Natural killer cell (primary cell): ENCODE measurements at regions of chrX and their contacts with region 1.

Region 1: DNA sequence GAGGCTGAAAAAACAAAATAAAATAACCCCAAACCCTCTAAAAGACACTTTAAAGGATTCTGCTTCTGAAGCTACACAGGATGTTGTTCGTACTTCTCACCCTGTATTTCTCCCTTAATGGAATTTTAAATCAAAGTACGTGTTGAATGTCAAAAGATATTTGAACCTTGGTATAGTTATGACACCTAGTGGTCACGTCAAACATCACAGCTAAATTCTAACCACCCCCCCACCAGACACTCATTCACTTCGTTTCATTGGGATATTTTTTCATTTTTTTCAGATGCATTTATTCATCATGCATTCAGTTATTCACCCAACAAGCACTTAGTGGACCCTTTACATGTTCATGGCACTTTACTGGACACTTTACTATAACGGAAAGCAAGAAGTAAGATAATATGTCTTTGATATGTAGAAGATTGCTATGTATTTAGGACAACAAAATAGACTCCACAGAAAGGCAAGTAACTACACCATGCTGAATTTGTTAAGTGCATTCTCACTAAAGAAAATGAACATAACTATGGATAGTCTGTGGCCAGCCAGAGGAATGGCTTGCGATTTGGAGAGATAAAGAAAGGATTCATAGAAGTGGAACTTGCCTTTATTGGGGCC is 62.5 kb upstream of the GPR174 start:
- DNase-seq: peak in 1 of 2 donors; percentile 79
- ATAC-seq: peak; percentile 69 to 88 (median 87)
- H3K4me3 ChIP-seq: no peak overlapping the region
- H3K4me3 Mint-ChIP-seq: no peak overlapping the region
- H3K27ac ChIP-seq: no peak overlapping the region
- H3K27ac Mint-ChIP-seq: peak overlapping the region in 1 of 2 donors; percentile 4
- H3K4me1 ChIP-seq: no peaks in the 10 kb centered on the region
- H3K4me1 Mint-ChIP-seq: peaks cover 7 to 11% of the 10 kb centered on the region in 2 donors
- H3K27me3 ChIP-seq: no peaks in the 10 kb centered on the region
- H3K27me3 Mint-ChIP-seq: no peaks in the 10 kb centered on the region
- CTCF ChIP-seq: peak; percentile 59

Region 2: DNA sequence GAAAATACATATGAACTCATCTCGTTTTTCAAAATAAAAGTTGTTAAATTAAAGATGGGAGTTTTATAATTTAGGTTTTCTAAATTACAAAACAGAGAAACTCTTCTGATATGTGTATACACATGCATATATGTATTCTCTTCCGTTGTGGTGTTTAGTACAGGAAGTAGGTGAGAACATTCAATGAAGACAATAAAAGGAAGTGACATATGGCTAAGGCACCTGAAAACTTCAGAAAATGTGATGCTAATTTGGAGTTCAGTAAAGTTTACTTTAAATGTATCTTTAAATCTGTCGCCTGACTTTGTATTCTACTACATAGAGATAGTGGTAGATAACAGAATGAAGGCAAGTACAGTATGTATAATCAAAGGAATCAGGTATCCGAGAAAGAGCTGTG is 318.6 kb after region 1 on chrX:
- intact Hi-C with region 1: loop called (anchors 10 kb)
- DNase-seq: peak in 1 of 2 donors; percentile 19
- ATAC-seq: peak; percentile 47 to 68 (median 49)
- H3K4me3 ChIP-seq: no peak overlapping the region
- H3K4me3 Mint-ChIP-seq: peak overlapping the region; percentile 60
- H3K27ac ChIP-seq: peak overlapping the region; percentile 25
- H3K27ac Mint-ChIP-seq: peak overlapping the region; percentile 77 to 78
- H3K4me1 ChIP-seq: peaks cover 5% of the 10 kb centered on the region
- H3K4me1 Mint-ChIP-seq: peaks cover 4 to 7% of the 10 kb centered on the region in 2 donors
- H3K27me3 ChIP-seq: no peaks in the 10 kb centered on the region
- H3K27me3 Mint-ChIP-seq: no peaks in the 10 kb centered on the region
- CTCF ChIP-seq: no peak